ENCODE measurements at regions of chr19 and their contacts with region 1.

Region 1: DNA sequence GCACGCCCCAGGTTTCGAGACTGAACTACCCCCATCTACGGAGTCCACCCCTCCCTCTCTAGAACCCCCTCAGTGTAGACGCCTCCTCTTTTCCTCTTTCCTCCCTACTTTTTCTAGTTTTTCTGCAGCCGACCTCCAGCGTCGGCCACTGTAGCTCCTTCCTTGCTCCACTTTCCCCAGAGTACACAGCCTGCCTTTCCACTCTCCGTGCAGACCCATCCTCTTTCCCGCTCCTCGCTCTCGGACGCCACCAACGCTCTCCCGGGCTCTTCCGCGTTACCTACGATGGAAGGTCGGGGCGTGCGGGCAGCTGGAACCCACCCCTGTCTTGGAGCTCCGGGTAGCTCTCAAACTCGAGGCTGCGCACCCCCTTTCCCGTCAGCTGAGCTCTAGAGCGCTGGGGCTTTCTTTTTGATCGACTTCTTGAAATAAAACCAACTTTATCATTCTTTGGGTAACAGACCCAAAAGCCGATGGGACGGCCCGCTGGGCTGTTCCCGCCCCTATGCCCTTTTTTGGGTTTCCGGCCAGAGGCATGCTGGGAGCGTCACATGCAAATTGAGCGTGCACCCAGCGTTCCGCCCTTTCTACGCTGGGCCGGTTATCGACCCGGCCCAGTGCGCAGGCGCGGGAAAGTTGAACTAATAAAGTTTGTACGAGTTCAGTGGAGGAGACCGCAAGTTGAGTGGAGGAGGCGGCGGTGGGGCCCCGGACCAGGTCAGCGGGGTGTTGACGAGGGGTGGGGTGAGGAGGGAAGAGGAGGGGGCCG is at the starts of genes BCL2L12 and IRF3:
- DNase-seq: peak; percentile 94
- H3K4me3 ChIP-seq: peak within 1 kb of the TSS; percentile 52 to 90 (median 81)
- H3K27ac ChIP-seq: peak within 1 kb of the TSS; percentile 80
- H3K4me1 ChIP-seq: peaks cover 15% of the 10 kb centered on the region
- H3K27me3 ChIP-seq: no peaks in the 10 kb centered on the region
- CTCF ChIP-seq: no peak
- total RNA-seq, gene BCL2L12: 4.3 to 43.1 TPM
- total RNA-seq, gene IRF3: 39.7 to 94.2 TPM

Region 2: GRCh38 chr19:49487277-49488045 is 178.1 kb before region 1 on chr19 and contains the start of gene RPL13A:
- CTCF ChIA-PET with region 1: no interaction called
- dilution Hi-C with region 1: no loop called
- in situ Hi-C with region 1: no loop called
- intact Hi-C with region 1: no loop called
- DNase-seq: peak; percentile 98
- H3K4me3 ChIP-seq: peak within 1 kb of the TSS; percentile 77 to 99 (median 99)
- H3K27ac ChIP-seq: peak within 1 kb of the TSS; percentile 96
- H3K4me1 ChIP-seq: peaks cover 11% of the 10 kb centered on the region
- H3K27me3 ChIP-seq: no peaks in the 10 kb centered on the region
- CTCF ChIP-seq: no peak
- total RNA-seq, gene RPL13A: 1,880 to 1,955 TPM

Region 3: DNA sequence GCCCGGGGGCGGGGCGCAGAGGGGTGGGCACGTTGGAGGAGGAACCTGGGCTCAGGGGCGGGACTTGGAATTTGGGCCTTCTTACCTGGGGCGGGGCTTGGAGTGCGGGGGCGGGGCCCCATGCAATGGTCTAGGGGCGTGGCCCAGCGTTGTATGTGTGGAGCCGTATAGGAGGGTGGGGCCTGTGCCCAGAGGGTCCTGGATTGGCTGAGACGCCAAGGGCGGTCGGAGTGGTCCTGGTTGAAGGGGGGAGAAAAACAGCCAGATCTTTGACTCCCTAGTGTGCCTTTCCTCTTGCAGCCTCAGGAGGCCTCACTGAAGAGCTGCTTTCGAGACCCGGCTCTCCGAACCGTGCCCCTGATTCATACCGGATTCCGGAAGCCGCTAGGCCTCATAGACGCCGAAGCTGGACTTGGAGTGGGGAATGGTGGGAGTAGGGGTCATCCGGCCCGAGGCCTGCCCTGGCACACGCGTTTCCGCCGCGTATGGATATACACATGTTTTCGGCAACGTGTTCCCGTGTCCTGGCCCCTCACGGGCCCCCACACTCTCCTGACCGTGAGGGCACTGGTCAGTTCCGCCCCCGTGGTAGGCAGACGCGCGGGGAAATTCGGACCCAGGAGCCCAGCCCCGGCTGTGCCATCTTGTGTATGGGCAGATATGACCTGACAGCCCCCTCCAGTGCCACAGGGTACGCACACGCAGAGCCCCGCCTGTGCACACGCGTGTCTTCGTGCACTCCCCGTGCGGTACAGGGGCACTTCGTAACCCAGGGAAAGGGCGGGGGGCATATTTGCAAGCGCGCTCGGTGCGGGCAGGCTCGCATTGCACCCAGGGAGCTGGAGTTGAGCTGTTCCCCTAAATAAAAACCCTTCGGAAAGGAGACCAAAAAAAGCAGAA is 75.2 kb before region 1 on chr19:
- CTCF ChIA-PET with region 1: no interaction called
- dilution Hi-C with region 1: no loop called
- in situ Hi-C with region 1: no loop called
- intact Hi-C with region 1: loop called (anchors 1 kb)
- DNase-seq: peak; percentile 93
- H3K4me3 ChIP-seq: peak overlapping the region; percentile 42 to 78 (median 60)
- H3K27ac ChIP-seq: peak overlapping the region; percentile 63
- H3K4me1 ChIP-seq: peaks cover 13% of the 10 kb centered on the region
- H3K27me3 ChIP-seq: no peaks in the 10 kb centered on the region
- CTCF ChIP-seq: no peak